ENCODE measurements at regions of chr12 and their contacts with region 1.

Region 1: GRCh38 chr12:117212563-117213190 is 22.4 kb upstream of the FBXO21 start:
- DNase-seq: no peak
- H3K4me3 ChIP-seq: no peak overlapping the region
- H3K27me3 ChIP-seq: no peaks in the 10 kb centered on the region; the same call in 1 of the 2 replicates
- CTCF ChIP-seq: peak; percentile 93

Region 2: GRCh38 chr12:117202556-117202955 is 10.1 kb before region 1 on chr12:
- CTCF ChIA-PET with region 1: interaction called, 18 read pairs
- POLR2A ChIA-PET with region 1: no interaction called
- DNase-seq: no peak
- H3K4me3 ChIP-seq: no peak overlapping the region
- H3K27me3 ChIP-seq: no peaks in the 10 kb centered on the region; the same call in 1 of the 2 replicates
- CTCF ChIP-seq: no peak

Region 3: GRCh38 chr12:117228239-117228638 is 15.6 kb after region 1 on chr12:
- CTCF ChIA-PET with region 1: interaction called, 12 read pairs
- POLR2A ChIA-PET with region 1: no interaction called
- DNase-seq: no peak
- H3K4me3 ChIP-seq: no peak overlapping the region
- H3K27me3 ChIP-seq: no peaks in the 10 kb centered on the region
- CTCF ChIP-seq: no peak

Region 4: GRCh38 chr12:117850048-117850447 is 637.4 kb after region 1 on chr12:
- CTCF ChIA-PET with region 1: interaction called, 54 read pairs
- POLR2A ChIA-PET with region 1: no interaction called
- DNase-seq: no peak
- H3K4me3 ChIP-seq: no peak overlapping the region
- H3K27me3 ChIP-seq: peaks cover 5% of the 10 kb centered on the region; the same call in 1 of the 2 replicates
- CTCF ChIP-seq: peak; percentile 90

Region 5: DNA sequence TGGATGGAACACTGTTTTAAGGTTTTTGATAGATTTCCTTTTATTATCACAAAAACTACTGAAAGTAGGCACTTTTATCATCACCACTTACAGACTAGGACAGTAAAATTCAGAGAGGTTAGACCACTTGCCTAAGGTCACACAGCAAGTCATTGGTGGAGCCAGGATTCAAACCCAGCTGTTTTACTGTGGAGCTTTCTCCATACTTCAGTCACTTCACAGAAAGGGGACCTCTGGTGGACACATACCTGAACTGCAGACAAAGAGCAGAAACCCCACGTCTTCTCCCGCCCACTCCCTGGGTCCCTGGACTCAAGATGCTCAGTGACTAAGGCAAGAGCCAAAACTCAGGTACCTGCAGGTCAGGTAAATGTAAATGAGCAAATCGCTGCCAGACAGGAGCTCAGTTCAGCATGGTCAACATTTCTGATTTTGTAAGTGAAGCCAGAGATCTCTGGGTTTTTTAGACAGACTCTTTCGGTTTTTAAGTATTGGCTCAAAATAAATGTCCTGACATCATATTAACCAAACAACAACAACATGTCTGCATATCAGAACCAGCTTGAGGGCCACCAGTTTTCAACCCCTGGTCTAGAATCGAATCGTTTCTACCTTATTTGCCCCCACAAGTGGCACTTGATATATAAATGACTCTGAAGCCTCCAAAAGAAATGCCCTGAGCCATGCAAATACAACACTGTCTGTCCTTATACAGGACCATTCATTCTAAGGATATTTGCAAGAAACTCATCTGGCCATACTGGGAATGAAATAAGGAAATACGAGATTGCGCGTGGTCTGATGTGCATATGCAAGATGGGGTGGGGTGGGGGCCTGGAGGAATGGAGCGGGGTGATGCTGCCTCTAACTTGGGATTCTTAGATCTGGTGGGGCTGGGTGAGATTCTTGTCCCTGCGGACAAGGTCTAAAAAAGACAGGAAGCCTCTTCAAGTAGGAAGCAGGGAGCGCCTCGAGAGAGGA is 645.2 kb after region 1 on chr12:
- CTCF ChIA-PET with region 1: interaction called, 59 read pairs
- POLR2A ChIA-PET with region 1: no interaction called
- DNase-seq: no peak
- H3K4me3 ChIP-seq: no peak overlapping the region
- H3K27me3 ChIP-seq: no peaks in the 10 kb centered on the region; the same call in 1 of the 2 replicates
- CTCF ChIP-seq: peak; percentile 72

Measured in BJ (cell line).